AG04449 (cell line): ENCODE measurements at regions of chr3 and their contacts with region 1.

Region 1: DNA sequence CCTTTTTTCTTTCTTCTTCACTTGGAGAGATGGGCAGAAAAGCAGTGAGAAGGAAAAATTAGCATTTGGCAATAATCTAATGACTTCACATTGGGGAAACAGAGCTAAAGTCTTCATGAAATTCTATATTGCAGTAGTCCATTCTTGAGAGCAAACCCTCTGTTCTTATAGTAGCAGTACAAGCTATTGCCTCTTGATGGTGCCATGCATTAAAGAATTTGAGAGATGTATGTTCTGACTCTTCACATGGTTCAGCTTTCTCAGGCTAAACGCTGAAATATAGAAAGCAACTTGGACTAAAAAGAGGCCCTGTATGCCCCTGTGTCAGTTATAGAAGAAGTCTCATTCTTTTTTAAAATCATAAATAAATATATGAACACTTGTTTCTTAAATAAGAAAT is 36.0 kb downstream of the PHLDB2 start:
- DNase-seq: no peak
- H3K4me3 ChIP-seq: no peak overlapping the region
- CTCF ChIP-seq: peak; percentile 36

Region 2: DNA sequence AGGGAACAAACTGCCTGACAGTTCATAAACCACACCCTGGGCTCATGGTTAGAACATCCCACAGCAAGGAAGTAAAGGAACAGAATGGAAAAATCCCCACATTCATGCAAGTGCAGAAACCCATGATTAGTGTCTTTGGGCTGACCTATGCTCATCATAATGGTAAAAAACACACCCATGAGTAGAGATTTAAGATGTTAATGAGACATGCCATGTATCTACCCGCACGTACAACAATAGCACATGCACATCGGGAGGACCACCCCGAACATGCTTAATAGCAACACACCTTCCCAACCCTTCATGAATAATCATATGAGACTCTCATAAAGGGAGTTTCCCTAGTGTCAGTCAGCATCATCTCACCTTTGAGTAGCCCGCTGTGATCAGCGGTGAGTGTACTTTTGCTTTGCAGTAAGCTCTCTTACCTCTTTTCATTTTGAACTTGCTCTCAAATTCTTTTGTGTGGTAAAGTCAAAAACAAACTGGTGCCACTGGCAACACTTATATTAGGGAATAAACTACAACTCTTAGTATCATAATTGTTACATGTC is 323.1 kb before region 1 on chr3:
- CTCF ChIA-PET with region 1: no interaction called
- POLR2A ChIA-PET with region 1: no interaction called
- DNase-seq: no peak
- H3K4me3 ChIP-seq: no peak overlapping the region
- CTCF ChIP-seq: no peak

Region 3: DNA sequence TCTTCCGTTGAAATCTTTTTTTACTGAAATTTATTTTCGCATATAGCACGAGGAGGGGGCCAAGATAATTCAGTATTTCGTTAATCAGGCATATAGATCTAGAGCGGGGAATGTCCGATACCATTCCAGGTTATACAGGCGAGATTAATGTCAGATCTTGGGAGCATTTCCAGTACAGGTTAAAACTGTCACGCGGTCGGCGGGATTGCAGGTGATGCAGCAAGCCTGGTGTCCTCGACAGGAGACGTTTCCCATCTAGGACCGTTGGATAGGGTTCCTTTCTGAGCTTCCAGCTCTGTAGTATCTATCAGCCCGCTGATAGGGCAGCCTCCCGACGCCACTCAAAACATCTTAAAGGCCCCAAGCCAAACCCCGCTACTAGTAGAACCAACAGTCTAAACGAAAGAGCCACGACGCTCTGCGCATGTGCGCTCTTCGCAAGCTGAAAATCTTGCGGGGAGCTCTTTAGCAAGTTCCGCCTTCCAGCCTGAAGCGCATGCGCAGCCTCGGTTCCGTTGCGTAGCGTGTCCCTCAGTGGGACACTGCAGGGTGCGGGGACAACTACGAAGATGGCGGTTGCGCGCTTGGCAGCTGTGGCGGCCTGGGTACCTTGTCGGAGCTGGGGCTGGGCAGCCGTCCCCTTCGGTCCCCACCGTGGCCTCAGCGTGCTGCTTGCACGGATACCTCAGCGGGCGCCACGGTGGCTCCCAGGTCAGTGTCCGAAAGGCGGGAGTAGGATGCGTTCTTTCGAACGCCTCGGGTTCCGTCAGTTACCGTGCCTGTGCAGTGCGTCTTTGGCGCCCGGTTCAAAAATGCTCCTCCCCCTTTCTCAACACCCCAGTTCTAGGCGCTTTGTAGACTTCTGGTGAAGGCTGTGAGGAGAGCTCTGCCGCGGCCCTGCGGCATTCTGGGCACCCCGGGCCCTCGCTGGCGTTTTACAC is 83.7 kb after region 1 on chr3 and contains the start of gene ABHD10:
- CTCF ChIA-PET with region 1: interaction called, 10 read pairs
- POLR2A ChIA-PET with region 1: no interaction called
- DNase-seq: peak; percentile 84
- H3K4me3 ChIP-seq: peak within 1 kb of the TSS; percentile 89
- CTCF ChIP-seq: no peak

Region 4: GRCh38 chr3:112303764-112304325 is 408.8 kb after region 1 on chr3:
- CTCF ChIA-PET with region 1: no interaction called
- POLR2A ChIA-PET with region 1: no interaction called
- DNase-seq: no peak
- H3K4me3 ChIP-seq: peak overlapping the region; percentile 54
- CTCF ChIP-seq: no peak